Panc1 (cell line): ENCODE measurements at regions of chr6 and their contacts with region 1.

Region 1: DNA sequence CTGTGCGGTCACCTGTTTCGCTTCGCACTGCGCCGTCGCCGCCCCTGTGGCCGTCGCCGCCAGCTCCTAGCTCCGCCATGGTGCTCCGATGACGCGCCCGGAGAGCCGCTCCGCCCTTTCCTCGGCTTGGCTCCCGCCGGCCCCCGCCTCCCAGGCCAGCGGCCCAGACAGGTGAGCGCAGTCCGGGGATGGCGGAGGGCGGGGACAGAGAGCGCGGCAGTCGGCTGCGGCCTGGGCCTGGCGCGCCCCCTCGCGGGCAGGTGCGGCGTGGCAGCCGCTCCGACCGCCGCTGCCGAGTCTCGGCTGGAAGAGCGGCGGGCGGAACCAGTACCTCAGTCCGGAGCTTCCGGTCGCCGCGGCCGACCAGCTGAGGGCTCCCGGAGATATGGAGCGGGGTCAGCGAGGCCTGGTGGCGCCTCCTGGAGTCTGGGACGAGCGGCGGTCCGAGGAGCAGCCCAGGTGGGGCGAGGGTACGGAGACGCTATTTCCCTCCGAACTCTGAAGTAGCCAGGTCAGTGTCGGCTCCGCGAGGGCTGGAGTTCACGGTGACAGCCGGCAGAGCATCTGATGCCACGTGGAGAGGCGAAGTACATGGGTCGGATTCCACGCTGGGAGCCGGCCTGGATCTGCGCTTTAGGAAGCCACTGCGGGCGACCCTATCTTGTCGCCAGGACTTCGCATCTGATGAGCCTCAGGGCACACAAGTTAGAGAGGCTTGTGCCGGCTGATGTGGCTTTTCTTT is at the start of gene MAP7:
- DNase-seq: no peak
- ATAC-seq: peak; percentile 92
- H3K4me3 ChIP-seq: peak within 1 kb of the TSS; percentile 55 to 58
- H3K27ac ChIP-seq: no peak within 1 kb of the TSS
- H3K4me1 ChIP-seq: peaks cover 5% of the 10 kb centered on the region; the same call in 1 of the 2 replicates
- H3K27me3 ChIP-seq: peaks cover 14% of the 10 kb centered on the region
- CTCF ChIP-seq: peak; percentile 99
- total RNA-seq, gene MAP7: 1.8 TPM

Region 2: GRCh38 chr6:136344420-136344819 is 206.1 kb before region 1 on chr6:
- CTCF ChIA-PET with region 1: interaction called, 9 read pairs
- POLR2A ChIA-PET with region 1: no interaction called
- in situ Hi-C with region 1: no loop called
- intact Hi-C with region 1: loop called (anchors 5 kb)
- DNase-seq: no peak
- ATAC-seq: no peak
- H3K4me3 ChIP-seq: no peak overlapping the region
- H3K27ac ChIP-seq: no peak overlapping the region
- H3K4me1 ChIP-seq: no peaks in the 10 kb centered on the region
- H3K27me3 ChIP-seq: no peaks in the 10 kb centered on the region
- CTCF ChIP-seq: no peak